ENCODE measurements at regions of chr1 and their contacts with region 1.

Region 1: DNA sequence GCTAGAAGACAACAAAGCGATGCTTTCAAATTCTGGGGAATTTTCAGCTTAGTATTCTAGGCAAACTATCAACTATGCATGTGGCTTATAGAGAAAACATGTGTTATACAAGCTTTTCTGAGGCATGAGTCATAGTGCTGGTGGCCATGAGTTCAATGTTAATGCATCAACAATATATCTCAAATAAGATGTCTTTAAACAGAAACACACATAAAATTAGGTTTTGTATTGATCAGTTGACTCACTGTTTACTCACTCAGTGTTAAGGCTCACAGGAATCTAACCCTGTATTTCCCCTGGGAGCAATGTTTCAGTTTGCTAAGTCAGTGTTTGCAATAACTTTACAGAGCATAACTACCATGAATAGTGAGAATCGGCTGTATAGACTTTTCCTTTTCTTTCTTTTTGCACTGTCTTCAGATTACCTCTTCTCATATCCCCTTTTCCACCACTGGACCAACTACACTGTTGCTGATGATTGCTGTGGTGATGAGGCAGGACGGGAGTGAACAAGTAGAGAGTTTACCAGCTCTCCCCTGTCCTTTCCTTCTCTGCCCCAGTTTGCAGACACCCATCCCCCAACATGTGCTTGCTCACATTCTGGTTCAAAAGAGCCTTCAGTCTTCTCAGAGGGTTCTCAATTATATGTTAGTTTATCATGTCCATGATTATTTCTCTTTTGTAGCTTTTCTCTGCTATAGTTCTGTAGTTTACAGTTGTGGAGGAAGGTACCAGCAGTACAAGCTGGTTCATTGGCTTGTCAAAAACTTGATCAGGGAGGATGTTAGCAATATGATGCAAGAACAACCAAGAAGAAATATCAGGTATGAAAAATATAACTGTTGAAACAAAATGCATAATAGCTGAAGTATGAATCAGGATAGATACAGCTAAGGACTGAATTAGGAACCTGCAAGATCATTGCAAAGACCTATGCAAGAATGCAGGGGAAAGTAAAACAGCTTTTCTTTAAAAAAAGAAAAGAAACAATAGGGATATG is 23.9 kb downstream of the CD2 start:
- DNase-seq: no peak
- H3K4me3 ChIP-seq: no peak overlapping the region
- H3K27ac ChIP-seq: no peak overlapping the region
- H3K4me1 ChIP-seq: no peaks in the 10 kb centered on the region
- H3K27me3 ChIP-seq: no peaks in the 10 kb centered on the region
- CTCF ChIP-seq: no peak
- POLR2A ChIP-seq: no peak

Region 2: DNA sequence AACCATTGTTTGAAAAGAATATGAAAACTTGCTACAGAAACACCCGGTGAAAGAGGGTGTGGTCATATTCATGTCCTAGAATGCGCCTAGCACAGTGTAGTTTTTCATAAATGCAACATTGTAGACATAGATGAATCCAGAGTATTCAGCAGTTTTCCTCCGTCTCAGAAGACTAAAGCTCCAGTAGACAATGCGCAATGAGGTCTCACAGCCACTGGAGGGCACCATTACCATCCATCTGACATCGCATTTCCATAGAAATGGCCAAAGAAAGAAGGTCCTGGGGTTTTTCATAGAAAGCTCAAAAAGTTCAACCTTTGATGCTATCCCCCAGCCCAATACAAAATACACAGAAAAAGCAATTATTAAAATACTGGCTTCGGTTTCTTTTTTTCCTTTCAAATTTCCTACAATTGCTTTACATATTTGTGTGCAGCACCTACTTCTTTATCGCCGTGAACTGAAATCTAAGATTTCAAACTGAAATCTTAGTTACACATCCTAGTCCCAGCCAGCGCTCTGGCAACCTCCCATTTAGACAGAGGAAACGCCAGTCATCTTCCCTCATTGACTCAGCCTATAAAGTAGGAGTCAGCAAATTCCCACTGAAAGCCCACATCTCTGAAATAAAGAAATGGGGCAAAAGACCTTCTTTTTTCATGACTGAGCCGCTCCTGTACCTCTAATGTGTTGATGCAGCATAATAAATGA is 203.4 kb before region 1 on chr1:
- intact Hi-C with region 1: loop called (anchors 5 kb)
- DNase-seq: peak in 1 of 2 donors; percentile 40
- H3K4me3 ChIP-seq: no peak overlapping the region
- H3K27ac ChIP-seq: no peak overlapping the region
- H3K4me1 ChIP-seq: peaks cover 0 to 7% of the 10 kb centered on the region in 2 donors
- H3K27me3 ChIP-seq: no peaks in the 10 kb centered on the region
- CTCF ChIP-seq: peak; percentile 56 to 84 (median 79)
- POLR2A ChIP-seq: no peak